GM18951 (cell line): ENCODE measurements at regions of chr16 and their contacts with region 1.

Region 1: GRCh38 chr16:1054660-1055556 is 17.6 kb upstream of the SSTR5 start:
- POLR2A ChIP-seq: no peak

Region 2: GRCh38 chr16:842061-842476 is 212.8 kb before region 1 on chr16:
- in situ Hi-C with region 1: loop called (anchors 25 kb)
- POLR2A ChIP-seq: no peak

Region 3: GRCh38 chr16:964356-965042 is 90.4 kb before region 1 on chr16:
- in situ Hi-C with region 1: no loop called
- POLR2A ChIP-seq: no peak

Region 4: GRCh38 chr16:974611-975261 is 80.2 kb before region 1 on chr16:
- in situ Hi-C with region 1: no loop called
- POLR2A ChIP-seq: no peak